OCI-LY7 (cell line): ENCODE measurements at regions of chr17 and their contacts with region 1.

Region 1: DNA sequence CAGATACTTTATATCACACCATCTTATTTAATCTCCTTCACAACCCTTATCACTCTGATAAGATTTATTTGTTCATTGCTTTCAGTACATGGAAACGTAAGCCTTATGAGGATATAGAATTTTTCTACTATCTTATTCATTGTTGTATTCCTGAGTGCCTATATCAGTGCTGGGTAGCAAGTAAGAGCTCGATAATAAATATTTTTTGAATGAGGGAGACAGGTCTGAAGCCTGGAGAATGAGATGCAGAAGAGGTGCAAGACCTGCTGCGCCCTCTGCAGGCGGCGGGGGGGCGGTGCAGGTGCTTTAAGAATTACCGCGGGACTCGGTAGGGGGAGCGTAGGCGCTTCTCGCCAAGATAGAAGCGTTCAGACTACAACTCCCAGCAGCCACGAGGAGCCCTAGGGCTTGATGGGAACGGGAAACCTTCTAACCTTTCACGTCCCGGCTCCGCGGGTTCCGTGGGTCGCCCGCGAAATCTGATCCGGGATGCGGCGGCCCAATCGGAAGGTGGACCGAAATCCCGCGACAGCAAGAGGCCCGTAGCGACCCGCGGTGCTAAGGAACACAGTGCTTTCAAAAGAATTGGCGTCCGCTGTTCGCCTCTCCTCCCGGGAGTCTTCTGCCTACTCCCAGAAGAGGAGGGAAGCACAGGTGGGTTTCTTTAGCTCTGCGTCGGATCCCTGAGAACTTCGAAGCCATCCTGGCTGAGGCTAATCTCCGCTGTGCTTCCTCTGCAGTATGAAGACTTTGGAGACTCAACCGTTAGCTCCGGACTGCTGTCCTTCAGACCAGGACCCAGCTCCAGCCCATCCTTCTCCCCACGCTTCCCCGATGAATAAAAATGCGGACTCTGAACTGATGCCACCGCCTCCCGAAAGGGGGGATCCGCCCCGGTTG is at the start of gene WRAP53:
- DNase-seq: peak; percentile 98
- H3K4me3 ChIP-seq: peak within 1 kb of the TSS; percentile 92
- H3K27ac ChIP-seq: peak within 1 kb of the TSS; percentile 93
- H3K4me1 ChIP-seq: peaks cover 27% of the 10 kb centered on the region
- CTCF ChIP-seq: peak; percentile 100
- total RNA-seq, gene WRAP53: 30.7 and 39.3 TPM in 2 replicates

Region 2: DNA sequence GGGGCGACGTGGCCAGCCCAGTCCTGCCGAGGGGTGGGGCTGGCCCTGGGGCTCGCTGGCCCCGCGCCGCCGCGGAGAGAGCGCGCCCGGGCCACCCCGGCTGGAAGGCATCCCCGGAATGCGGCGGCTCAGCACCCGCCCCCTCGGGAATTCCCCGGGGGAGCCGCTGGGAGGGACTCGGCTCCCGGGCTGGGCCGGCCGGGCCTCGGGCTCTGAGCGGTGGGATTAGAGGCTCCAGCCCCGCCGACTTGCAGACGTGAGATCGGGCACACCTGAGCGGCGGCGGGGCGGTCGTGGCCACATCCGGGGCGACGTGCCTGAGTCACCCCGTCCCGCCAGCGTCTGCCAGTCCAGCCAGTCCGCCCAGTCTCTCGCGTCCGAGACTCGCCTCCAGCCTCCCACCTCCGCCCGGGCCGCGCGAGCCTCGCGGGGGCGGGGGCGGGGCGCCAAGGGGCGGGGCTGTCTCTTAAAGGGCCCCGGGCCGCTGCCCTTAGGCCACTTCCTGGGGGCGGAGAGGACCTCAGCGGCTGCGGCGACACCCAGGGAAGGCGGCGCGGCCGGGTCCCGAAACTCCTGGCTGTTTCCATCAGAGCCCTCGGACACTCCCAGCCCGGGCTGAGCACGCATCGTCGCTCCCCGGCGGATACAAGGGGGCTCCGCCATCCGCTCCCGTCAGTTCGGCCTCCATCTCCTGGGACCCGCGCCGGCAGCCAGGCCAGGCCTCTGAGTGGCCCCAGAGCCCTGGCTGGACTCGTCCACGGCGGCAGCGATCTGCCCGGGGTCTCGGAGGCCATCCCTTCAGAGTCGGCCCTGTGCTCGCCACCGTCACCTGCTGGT is 336.3 kb before region 1 on chr17 and contains the start of gene KCTD11:
- CTCF ChIA-PET with region 1: no interaction called
- POLR2A ChIA-PET with region 1: no interaction called
- intact Hi-C with region 1: loop called (anchors 5 kb)
- DNase-seq: peak; percentile 80
- H3K4me3 ChIP-seq: peak within 1 kb of the TSS; percentile 75
- H3K27ac ChIP-seq: peak within 1 kb of the TSS; percentile 55
- H3K4me1 ChIP-seq: peaks cover 36% of the 10 kb centered on the region
- CTCF ChIP-seq: no peak
- total RNA-seq, gene KCTD11: 4.1 and 6.0 TPM in 2 replicates

Region 3: DNA sequence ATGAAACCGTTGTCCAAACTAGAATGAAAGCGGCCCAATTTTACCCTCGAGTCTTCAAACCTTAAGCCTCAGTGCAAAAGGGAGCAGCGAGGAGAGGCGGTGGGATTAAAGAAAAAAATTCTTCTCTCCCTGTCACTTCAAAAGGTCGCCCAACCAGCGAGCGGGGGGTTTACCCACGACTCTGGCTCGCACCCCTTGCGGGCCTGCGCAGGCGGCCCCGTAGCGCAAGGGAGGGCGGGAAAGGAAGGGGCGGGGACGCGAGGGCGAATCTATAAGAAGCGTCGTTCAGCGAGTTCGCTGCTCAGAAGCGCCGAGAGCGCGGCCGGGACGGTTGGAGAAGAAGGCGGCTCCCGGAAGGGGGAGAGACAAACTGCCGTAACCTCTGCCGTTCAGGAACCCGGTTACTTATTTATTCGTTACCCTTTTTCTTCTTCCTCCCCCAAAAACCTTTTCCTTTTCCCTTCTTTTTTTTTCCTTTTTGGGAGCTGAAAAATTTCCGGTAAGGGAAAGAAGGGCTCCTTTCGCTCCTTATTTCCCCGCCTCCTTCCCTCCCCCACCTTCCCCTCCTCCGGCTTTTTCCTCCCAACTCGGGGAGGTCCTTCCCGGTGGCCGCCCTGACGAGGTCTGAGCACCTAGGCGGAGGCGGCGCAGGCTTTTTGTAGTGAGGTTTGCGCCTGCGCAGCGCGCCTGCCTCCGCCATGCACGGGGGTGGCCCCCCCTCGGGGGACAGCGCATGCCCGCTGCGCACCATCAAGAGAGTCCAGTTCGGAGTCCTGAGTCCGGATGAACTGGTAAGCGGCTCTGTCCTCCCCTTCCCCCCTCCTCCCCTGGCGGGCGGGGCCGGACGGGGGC is 203.9 kb before region 1 on chr17 and contains the start of gene POLR2A:
- CTCF ChIA-PET with region 1: no interaction called
- POLR2A ChIA-PET with region 1: no interaction called
- intact Hi-C with region 1: loop called (anchors 1 kb)
- DNase-seq: peak; percentile 98
- H3K4me3 ChIP-seq: peak within 1 kb of the TSS; percentile 89
- H3K27ac ChIP-seq: peak within 1 kb of the TSS; percentile 90
- H3K4me1 ChIP-seq: peaks cover 38% of the 10 kb centered on the region
- CTCF ChIP-seq: no peak
- total RNA-seq, gene POLR2A: 76.6 and 84.2 TPM in 2 replicates

Region 4: DNA sequence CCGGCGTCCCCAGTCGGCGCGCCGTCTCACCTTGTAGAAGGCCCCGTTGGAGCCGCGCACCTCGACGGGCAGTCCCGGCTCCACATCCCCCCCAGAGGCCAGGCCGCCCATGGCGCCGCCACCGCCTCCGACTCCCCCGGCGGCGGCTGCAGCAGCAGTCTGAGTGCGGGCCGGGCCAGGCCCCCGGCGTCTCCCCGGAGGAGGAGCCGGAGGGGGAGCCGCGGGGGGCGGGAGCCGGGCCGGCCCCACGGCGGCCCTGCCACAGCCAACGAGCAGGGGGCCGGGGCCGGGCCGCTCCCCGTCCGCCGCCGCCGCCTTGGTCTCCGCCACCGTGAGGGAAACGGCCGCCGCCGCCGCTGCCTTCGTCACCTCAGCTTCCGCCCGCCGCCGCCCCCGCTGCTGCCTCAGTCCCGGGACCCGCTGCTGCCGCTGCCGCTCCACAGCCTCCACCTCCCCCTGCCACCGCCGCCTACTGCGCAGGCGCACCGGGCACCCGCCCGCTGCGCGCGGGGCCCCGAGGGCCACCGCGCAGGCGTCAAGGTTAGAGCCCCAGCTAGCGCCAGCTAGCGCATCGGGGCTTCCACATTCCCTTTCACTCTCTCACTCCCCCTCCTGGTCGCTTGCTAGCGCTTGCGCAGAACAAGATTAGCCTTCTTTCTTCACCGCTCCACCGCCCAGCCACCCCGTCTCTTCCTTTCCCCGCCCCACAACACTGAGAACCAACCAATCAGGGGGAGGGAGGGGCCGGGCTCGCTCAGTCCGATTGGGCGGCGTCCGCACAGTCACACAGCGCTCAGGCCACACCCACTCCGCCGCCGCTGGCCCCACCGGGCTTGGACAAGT is 73.5 kb before region 1 on chr17 and contains the start of gene FXR2:
- CTCF ChIA-PET with region 1: interaction called, 4 read pairs
- POLR2A ChIA-PET with region 1: interaction called, 5 read pairs
- intact Hi-C with region 1: loop called (anchors 1 kb)
- DNase-seq: peak; percentile 99
- H3K4me3 ChIP-seq: peak within 1 kb of the TSS; percentile 87
- H3K27ac ChIP-seq: peak within 1 kb of the TSS; percentile 59
- H3K4me1 ChIP-seq: peaks cover 20% of the 10 kb centered on the region
- CTCF ChIP-seq: peak; percentile 69
- total RNA-seq, gene FXR2: 24.6 and 32.4 TPM in 2 replicates

Region 5: DNA sequence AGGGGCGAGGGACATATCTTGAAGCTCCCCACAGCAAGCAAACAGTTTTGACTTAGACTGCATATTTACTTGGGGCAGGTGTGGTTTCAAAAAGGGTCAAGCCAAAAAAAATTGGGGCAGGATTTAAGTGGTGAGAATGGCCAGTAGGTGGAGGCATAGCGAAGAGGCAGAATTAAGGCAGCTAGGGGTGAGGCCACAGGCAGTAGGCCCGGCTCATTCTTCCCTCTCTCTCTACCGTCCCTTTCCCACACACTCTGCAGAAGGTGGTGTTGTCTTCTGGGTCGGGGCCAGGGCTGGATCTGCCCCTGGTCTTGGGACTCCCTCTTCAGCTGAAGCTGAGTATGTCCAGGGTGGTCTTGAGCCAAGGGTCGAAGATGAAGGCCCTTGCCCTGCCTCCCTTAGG is 55.7 kb before region 1 on chr17:
- CTCF ChIA-PET with region 1: no interaction called
- POLR2A ChIA-PET with region 1: interaction called, 6 read pairs
- intact Hi-C with region 1: loop called (anchors 1 kb)
- DNase-seq: peak; percentile 62
- H3K4me3 ChIP-seq: no peak overlapping the region
- H3K27ac ChIP-seq: no peak overlapping the region
- H3K4me1 ChIP-seq: no peaks in the 10 kb centered on the region
- CTCF ChIP-seq: peak; percentile 78

Region 6: DNA sequence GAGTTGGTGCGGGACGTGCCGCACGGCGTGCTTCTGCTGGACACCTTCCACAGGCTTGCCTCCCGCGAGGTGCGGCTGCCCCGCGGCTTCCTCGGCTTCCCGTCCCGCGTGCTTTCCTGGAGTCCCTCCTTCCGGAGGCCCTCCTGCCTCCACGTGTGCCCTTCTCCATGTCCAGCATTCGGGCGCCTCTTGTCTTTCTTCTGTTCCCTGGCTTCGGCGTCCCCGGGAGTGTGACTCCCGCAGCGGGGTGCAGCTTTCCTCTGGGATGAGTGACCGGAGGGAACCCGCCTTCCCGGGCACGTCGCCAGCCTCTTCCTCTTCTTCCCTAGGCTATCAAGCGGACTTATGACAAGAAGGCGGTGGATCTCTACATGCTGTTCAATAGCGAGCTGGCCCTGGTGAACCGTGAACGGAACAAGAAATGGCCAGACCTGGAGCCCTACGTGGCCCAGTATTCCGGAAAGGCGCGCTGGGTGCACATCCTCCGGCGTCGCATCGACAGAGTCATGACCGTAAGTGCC is 52.4 kb after region 1 on chr17:
- CTCF ChIA-PET with region 1: interaction called, 11 read pairs
- POLR2A ChIA-PET with region 1: no interaction called
- intact Hi-C with region 1: no loop called
- DNase-seq: no peak
- H3K4me3 ChIP-seq: no peak overlapping the region
- H3K27ac ChIP-seq: no peak overlapping the region
- H3K4me1 ChIP-seq: no peaks in the 10 kb centered on the region
- CTCF ChIP-seq: no peak

Region 7: DNA sequence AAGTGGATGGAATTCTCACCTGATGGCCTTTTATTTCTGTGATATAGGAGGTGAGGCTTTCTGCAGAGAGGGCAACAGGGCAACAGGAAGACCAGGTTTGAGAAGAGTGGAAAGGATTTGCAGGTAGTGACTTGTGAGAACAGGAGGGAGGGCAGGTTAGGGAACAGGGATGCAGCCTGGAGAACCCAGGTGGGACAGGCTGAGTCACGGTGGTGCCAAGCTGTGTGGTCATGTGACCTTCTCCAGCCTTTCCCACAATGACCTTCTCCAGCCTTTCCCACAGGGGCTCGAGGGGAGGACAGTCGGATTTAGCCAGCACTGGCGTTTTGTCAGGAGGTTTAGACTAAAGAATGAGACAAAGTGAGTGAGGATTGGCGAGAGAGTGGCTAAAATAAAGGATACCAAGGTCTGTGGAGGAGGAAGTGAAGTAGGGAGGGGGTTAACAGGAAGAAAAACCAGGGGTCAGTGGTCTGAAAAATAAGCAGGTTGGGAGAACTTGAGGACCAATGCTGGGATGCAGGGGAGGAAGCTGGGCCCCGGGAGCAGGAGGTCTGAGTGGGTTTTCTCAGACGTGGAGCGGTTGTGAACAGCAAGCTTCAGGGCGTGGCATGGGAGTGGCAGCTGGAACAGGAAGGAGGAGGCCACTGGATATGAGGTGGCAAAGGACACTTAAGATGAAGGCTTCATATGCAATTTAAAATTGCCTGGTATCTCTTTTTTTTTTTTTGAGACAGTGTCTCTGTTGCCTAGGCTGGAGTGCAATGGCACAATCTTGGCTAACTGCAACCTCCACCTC is 67.1 kb after region 1 on chr17:
- CTCF ChIA-PET with region 1: no interaction called
- POLR2A ChIA-PET with region 1: no interaction called
- intact Hi-C with region 1: no loop called
- DNase-seq: no peak
- H3K4me3 ChIP-seq: no peak overlapping the region
- H3K27ac ChIP-seq: no peak overlapping the region
- H3K4me1 ChIP-seq: no peaks in the 10 kb centered on the region
- CTCF ChIP-seq: no peak

Region 8: DNA sequence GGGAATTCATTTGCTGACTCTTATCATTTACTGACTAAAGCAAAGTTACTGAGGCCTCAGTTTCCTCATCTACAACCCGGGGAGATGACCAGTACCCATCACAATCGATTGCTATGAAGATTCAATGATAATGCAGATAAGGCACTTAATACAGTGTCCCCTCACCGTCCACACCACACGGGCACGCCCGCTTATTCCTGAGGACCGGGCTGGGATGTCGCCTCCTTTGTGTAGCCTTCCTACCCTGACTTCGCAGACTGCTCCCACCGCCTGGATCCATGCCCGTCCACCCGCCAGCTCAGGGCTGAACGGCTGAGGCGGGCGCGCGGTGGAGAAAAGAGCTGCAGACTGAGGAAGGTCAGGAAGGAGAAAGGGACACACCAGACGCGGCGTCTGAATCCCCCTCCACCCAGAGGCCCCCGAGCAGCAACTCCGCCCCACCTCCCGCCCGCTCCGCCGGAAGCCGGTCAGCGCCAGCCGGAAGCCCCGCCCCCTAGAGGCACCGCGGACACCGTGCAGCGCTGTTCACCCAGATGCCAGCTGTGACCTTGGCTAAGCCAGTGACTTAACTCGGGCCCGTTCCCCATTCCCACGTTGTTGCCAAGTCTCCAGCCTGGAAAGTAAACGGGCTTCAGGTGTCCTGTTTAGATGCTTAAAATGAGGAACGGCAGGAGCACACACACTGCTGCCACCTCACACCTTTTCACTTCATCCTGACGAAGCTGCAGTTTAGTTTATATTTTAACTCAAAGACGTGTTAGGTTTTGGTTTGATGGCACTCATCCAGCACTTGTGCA is 688.3 kb after region 1 on chr17 and contains the start of gene KRABD2:
- CTCF ChIA-PET with region 1: no interaction called
- POLR2A ChIA-PET with region 1: no interaction called
- intact Hi-C with region 1: loop called (anchors 5 kb)
- DNase-seq: peak; percentile 91
- H3K4me3 ChIP-seq: peak within 1 kb of the TSS; percentile 72
- H3K27ac ChIP-seq: peak within 1 kb of the TSS; percentile 76
- H3K4me1 ChIP-seq: peaks cover 57% of the 10 kb centered on the region
- CTCF ChIP-seq: peak; percentile 73